Caco-2 (cell line): ENCODE measurements at regions of chr4 and their contacts with region 1.

Region 1: DNA sequence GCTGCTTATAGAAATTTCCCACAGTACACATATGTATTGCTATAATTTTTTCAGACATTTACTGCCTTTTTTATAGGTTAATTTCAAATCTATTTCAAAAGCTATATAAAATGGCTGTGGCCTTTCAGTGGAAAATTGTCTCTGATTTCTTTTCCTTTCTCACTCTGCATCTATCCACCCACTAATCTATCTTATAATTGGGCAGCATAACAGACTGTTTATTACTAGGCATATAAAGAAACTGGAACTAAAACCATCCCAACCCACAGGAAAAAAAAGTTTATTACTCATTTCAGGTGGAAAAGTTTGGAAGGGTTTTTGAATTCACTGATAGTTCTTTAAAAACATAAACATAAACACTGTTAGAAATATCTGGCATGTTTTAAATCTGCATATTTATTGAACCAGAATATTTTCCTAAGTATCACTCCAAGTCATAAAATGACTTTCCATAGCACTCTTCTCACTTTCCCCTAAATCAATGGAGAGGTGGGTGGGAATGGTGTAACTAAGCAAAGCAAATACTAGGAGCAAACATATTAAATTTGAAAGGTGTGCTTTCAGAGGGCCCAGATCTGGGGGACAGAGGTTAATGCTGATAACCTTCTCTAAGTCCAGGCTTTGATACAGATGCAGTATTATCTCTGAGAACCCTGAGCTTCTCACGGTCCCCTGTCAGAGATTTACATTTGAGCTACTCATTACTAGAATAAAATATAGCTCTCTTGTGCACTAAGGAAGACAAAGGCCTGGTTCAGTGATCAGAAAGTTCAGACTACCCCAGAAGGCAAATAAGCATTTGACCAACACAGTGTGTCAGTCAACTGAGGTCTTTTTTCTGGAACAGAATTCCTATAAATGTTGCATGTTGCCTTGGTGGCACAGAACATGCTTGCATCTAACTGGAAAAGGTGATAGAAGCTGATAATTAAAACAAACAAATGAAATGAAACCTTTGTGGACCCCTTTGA is 328.3 kb downstream of the UNC5C start:
- DNase-seq: peak; percentile 54 to 67
- H3K4me3 ChIP-seq: no peak overlapping the region
- H3K4me3 Mint-ChIP-seq: no peak overlapping the region
- H3K27ac Mint-ChIP-seq: no peak overlapping the region
- H3K4me1 ChIP-seq: peaks cover 30% of the 10 kb centered on the region
- H3K4me1 Mint-ChIP-seq: peaks cover 6% of the 10 kb centered on the region
- H3K27me3 ChIP-seq: no peaks in the 10 kb centered on the region
- H3K27me3 Mint-ChIP-seq: no peaks in the 10 kb centered on the region
- CTCF ChIP-seq: no peak

Region 2: DNA sequence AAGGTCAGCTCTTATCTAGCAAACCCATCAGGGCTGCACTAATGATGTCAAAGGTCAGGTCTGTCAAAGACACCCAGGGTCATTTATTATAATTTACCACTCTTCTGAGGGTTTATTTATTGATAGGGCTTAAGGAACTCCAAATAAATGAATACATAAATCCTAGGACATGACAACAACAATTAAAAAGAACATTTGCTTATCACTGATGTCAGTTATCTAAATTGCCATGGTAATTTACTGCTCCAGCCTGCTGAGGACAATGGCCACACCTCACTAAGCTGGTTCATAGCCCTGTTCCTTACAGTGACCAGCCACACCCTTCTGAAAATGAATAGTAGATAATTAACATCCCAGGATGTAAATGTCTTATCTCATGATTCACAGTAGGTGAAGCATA is 11.2 kb after region 1 on chr4:
- CTCF ChIA-PET with region 1: interaction called, 3 read pairs
- POLR2A ChIA-PET with region 1: no interaction called
- intact Hi-C with region 1: loop called (anchors 1 kb)
- DNase-seq: peak; percentile 25 to 65
- H3K4me3 ChIP-seq: no peak overlapping the region
- H3K4me3 Mint-ChIP-seq: no peak overlapping the region
- H3K27ac Mint-ChIP-seq: no peak overlapping the region
- H3K4me1 ChIP-seq: peaks cover 12% of the 10 kb centered on the region
- H3K4me1 Mint-ChIP-seq: peaks cover 7% of the 10 kb centered on the region
- H3K27me3 ChIP-seq: no peaks in the 10 kb centered on the region
- H3K27me3 Mint-ChIP-seq: no peaks in the 10 kb centered on the region
- CTCF ChIP-seq: no peak

Region 3: GRCh38 chr4:95358421-95358820 is 137.9 kb after region 1 on chr4:
- CTCF ChIA-PET with region 1: no interaction called
- POLR2A ChIA-PET with region 1: no interaction called
- intact Hi-C with region 1: loop called (anchors 1 kb)
- DNase-seq: peak; percentile 13 to 39
- H3K4me3 ChIP-seq: no peak overlapping the region
- H3K4me3 Mint-ChIP-seq: no peak overlapping the region
- H3K27ac Mint-ChIP-seq: no peak overlapping the region
- H3K4me1 ChIP-seq: peaks cover 41% of the 10 kb centered on the region
- H3K4me1 Mint-ChIP-seq: peaks cover 9% of the 10 kb centered on the region
- H3K27me3 ChIP-seq: no peaks in the 10 kb centered on the region
- H3K27me3 Mint-ChIP-seq: no peaks in the 10 kb centered on the region
- CTCF ChIP-seq: no peak

Region 4: DNA sequence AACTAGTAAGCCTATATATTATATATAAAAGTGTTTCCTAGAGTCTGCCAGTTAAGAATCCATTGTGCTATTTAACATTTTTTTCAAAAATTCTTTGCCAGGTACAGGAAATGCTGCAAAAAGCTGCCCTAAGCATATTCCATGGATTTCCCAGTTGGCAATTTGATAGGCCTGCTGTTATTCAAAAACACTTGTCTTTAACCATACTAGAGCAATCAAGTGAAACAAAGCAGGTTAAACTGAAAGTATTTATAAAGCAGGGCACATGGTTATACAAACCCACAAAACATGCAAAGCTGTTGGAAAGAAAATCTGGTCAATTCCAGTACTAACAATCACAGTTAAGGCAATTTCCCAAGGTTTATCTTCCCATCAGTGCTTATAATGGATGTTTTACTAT is 168.4 kb after region 1 on chr4:
- CTCF ChIA-PET with region 1: no interaction called
- POLR2A ChIA-PET with region 1: no interaction called
- intact Hi-C with region 1: loop called (anchors 10 kb)
- DNase-seq: no peak
- H3K4me3 ChIP-seq: no peak overlapping the region
- H3K4me3 Mint-ChIP-seq: no peak overlapping the region
- H3K27ac Mint-ChIP-seq: no peak overlapping the region
- H3K4me1 ChIP-seq: peaks cover 40% of the 10 kb centered on the region
- H3K4me1 Mint-ChIP-seq: peaks cover 29% of the 10 kb centered on the region
- H3K27me3 ChIP-seq: no peaks in the 10 kb centered on the region
- H3K27me3 Mint-ChIP-seq: no peaks in the 10 kb centered on the region
- CTCF ChIP-seq: no peak